ENCODE measurements at regions of chr19 and their contacts with region 1.

Region 1: GRCh38 chr19:3970808-3971598 is at the start of gene DAPK3:
- DNase-seq: peak; percentile 97 to 98
- H3K4me3 ChIP-seq: peak within 1 kb of the TSS; percentile 69 to 92 (median 75)
- H3K27ac ChIP-seq: peak within 1 kb of the TSS; percentile 78; the same call in 1 of the 2 replicates
- H3K4me1 ChIP-seq: peaks cover 2 to 14% (median 6%) of the 10 kb centered on the region in 4 experiments; a peak in 6 of 7 replicates
- H3K27me3 ChIP-seq: no peaks in the 10 kb centered on the region
- CTCF ChIP-seq: no peak
- EP300 ChIP-seq: no peak
- POLR2A ChIP-seq: peak; percentile 37 to 82
- RAD21 ChIP-seq: no peak
- total RNA-seq, gene DAPK3: 78.1 and 80.8 TPM in 2 replicates

Region 2: GRCh38 chr19:3880471-3881271 is 90.3 kb before region 1 on chr19 and contains the start of gene ATCAY:
- CTCF ChIA-PET with region 1: interaction called, 7 read pairs
- POLR2A ChIA-PET with region 1: interaction called, 19 read pairs
- DNase-seq: peak in 1 of 2 experiments; percentile 71
- H3K4me3 ChIP-seq: peak within 1 kb of the TSS; percentile 55 to 79 (median 75)
- H3K27ac ChIP-seq: no peak within 1 kb of the TSS
- H3K4me1 ChIP-seq: peaks cover 0 to 4% (median 0%) of the 10 kb centered on the region in 4 experiments; a peak in 2 of 7 replicates
- H3K27me3 ChIP-seq: no peaks in the 10 kb centered on the region; a peak in 1 of 7 replicates
- CTCF ChIP-seq: no peak
- EP300 ChIP-seq: no peak
- POLR2A ChIP-seq: peak in 1 of 2 experiments; percentile 76; a peak in 1 of 3 replicates
- RAD21 ChIP-seq: no peak
- total RNA-seq, gene ATCAY: 31.6 and 33.8 TPM in 2 replicates

Region 3: DNA sequence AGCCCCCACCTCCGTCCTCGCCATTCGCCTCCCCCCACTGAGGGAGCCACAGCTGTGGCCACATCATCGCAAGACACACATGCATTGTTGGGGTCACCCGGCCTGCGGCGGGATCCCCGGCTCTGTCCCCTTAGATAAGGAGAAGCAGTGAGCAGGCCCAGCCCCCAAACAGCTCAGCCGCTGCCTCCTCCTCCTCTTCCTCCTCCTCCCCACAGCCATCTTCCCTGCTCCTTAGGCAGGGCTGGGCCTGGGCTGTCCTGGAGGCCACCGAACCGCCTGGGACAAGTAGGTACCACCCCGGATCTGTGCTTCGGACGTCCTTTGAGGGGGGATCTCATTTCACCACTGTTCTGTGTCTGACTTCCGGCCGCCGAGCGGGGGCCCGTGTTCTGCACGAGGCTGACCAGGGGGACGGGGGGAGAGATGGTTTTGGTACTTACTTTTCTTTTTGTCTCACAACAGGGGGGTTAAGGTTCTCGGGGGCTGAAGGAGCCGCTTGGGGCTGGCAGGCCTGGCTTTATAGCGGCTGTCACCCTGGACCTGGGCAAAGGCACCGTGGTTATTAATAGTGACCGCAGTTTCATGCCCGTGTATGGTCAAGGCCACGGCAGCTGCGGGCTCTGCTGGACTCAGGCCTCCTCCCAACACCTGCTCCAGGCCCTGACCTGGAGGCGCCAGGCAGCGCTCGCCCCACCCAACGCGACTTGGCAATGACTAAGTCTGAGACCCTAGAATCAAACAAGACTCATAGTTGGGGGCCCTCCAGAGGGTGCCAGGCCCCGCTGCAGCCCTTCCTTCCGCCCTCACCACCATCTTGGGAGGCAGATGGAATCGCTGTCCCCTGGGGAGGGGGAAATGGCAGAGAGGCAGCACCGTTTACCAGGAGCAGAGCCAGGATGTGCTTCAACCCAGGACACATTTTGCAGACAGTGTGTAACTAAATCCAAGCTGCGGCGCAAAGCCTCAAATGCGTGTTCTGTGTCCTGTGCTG is 19.8 kb before region 1 on chr19:
- CTCF ChIA-PET with region 1: interaction called, 4 read pairs
- POLR2A ChIA-PET with region 1: interaction called, 870 read pairs
- DNase-seq: no peak
- H3K4me3 ChIP-seq: no peak overlapping the region
- H3K27ac ChIP-seq: no peak overlapping the region
- H3K4me1 ChIP-seq: peaks cover 0 to 6% (median 2%) of the 10 kb centered on the region in 4 experiments; a peak in 4 of 7 replicates
- H3K27me3 ChIP-seq: no peaks in the 10 kb centered on the region
- CTCF ChIP-seq: no peak
- EP300 ChIP-seq: no peak
- POLR2A ChIP-seq: no peak
- RAD21 ChIP-seq: no peak